Activated CD8-positive, alpha-beta T cell treated with anti-CD3 and anti-CD28 coated beads for 36 hours (primary cell): ENCODE measurements at regions of chr1 and their contacts with region 1.

Region 1: GRCh38 chr1:212608209-212608955 is at the start of gene ATF3:
- DNase-seq: peak; percentile 97
- ATAC-seq: peak; percentile 90
- H3K4me3 Mint-ChIP-seq: peak within 1 kb of the TSS; percentile 90
- H3K27ac Mint-ChIP-seq: peak within 1 kb of the TSS; percentile 93
- H3K4me1 Mint-ChIP-seq: peaks cover 48% of the 10 kb centered on the region
- H3K27me3 Mint-ChIP-seq: peaks cover 42% of the 10 kb centered on the region
- CTCF ChIP-seq: no peak
- total RNA-seq, gene ATF3: 35.4 to 41.3 TPM

Region 2: DNA sequence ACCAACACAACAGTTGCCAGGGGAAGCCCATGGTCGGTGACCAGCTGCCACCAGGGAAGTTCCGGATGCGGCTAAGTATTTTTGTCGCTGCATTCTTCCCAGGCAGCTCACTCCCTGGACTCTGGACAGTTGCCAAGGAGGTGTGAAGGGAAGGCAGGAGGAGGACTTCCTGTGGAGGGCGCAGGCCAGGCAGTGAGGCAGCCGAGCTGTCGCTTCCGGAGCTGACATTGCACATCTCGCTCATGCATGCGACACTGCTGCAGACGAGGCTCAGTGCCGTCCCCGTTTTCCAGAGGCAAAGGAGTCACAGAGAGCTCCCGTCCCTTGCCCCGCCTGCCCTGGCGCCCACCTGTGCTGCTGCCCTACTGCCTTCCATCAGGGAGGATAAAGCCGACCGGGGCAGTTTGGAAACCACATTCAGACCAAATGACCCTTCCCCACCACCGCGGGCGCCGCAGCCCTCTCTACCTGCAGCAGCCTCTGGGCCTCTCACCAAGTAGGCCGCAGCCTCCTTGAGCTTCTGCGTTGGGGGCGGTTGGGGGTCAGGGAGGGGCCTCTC is 94.2 kb before region 1 on chr1:
- CTCF ChIA-PET with region 1: no interaction called
- POLR2A ChIA-PET with region 1: no interaction called
- intact Hi-C with region 1: no loop called
- DNase-seq: peak; percentile 43
- ATAC-seq: peak; percentile 64
- H3K4me3 Mint-ChIP-seq: no peak overlapping the region
- H3K27ac Mint-ChIP-seq: no peak overlapping the region
- H3K4me1 Mint-ChIP-seq: peaks cover 2% of the 10 kb centered on the region
- H3K27me3 Mint-ChIP-seq: peaks cover 52% of the 10 kb centered on the region
- CTCF ChIP-seq: no peak

Region 3: DNA sequence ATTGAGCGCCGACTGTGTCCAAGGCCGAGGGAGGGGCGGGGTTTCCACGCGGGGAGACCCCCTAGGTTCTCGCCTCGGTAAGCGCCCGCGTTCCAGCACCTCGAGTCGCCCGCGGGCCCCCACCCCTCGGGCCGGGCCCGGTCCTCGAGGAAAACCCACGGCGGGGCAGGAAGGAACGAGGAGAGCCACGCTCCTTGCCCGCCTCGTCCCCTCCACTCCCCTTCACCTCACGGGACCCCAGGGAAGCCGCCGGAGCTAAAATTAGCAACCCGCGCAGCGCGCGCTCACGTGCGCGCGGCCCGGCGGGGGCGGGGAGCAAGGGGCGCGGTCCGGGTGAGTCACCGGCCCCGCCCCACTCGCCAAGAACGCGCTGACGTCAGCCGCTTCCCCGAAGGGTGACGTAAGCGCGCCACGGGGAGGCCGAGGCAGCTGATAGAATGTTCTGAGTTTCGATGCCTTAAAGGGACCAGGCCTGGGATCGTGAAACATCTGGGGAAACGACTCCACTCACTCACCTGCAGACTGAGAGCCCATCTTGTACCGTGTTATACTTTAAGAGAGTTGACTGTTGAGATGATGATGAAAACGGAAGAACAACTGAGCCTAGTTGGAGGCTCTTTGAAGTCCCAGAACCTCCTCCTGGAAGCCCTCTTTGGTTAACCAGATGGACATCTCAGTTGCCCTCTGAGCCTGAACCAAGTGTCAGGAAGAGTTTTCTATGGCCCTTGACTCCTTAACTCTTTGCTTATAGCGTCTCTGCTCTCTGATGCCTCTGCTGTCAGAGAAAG is 49.5 kb before region 1 on chr1:
- CTCF ChIA-PET with region 1: no interaction called
- POLR2A ChIA-PET with region 1: interaction called, 11 read pairs
- intact Hi-C with region 1: no loop called
- DNase-seq: peak; percentile 93
- ATAC-seq: peak; percentile 95
- H3K4me3 Mint-ChIP-seq: peak overlapping the region; percentile 65
- H3K27ac Mint-ChIP-seq: peak overlapping the region; percentile 93
- H3K4me1 Mint-ChIP-seq: peaks cover 14% of the 10 kb centered on the region
- H3K27me3 Mint-ChIP-seq: peaks cover 12% of the 10 kb centered on the region
- CTCF ChIP-seq: no peak

Region 4: GRCh38 chr1:212566522-212567479 is 41.6 kb before region 1 on chr1:
- CTCF ChIA-PET with region 1: no interaction called
- POLR2A ChIA-PET with region 1: interaction called, 19 read pairs
- intact Hi-C with region 1: loop called (anchors 2 kb)
- DNase-seq: peak; percentile 82
- ATAC-seq: peak; percentile 98
- H3K4me3 Mint-ChIP-seq: peak overlapping the region; percentile 86
- H3K27ac Mint-ChIP-seq: peak overlapping the region; percentile 97
- H3K4me1 Mint-ChIP-seq: peaks cover 39% of the 10 kb centered on the region
- H3K27me3 Mint-ChIP-seq: no peaks in the 10 kb centered on the region
- CTCF ChIP-seq: no peak

Region 5: GRCh38 chr1:212595787-212596714 is 12.3 kb before region 1 on chr1:
- CTCF ChIA-PET with region 1: interaction called, 13 read pairs
- POLR2A ChIA-PET with region 1: interaction called, 35 read pairs
- intact Hi-C with region 1: no loop called
- DNase-seq: peak; percentile 70
- ATAC-seq: peak; percentile 92
- H3K4me3 Mint-ChIP-seq: peak overlapping the region; percentile 62
- H3K27ac Mint-ChIP-seq: peak overlapping the region; percentile 94
- H3K4me1 Mint-ChIP-seq: peaks cover 30% of the 10 kb centered on the region
- H3K27me3 Mint-ChIP-seq: peaks cover 6% of the 10 kb centered on the region
- CTCF ChIP-seq: peak; percentile 66

Region 6: GRCh38 chr1:212618501-212619405 is 10.4 kb after region 1 on chr1:
- CTCF ChIA-PET with region 1: interaction called, 4 read pairs
- POLR2A ChIA-PET with region 1: interaction called, 17 read pairs
- intact Hi-C with region 1: no loop called
- DNase-seq: no peak
- ATAC-seq: no peak
- H3K4me3 Mint-ChIP-seq: no peak overlapping the region
- H3K27ac Mint-ChIP-seq: no peak overlapping the region
- H3K4me1 Mint-ChIP-seq: peaks cover 32% of the 10 kb centered on the region
- H3K27me3 Mint-ChIP-seq: no peaks in the 10 kb centered on the region
- CTCF ChIP-seq: no peak